A549 (cell line): ENCODE measurements at regions of chr20 and their contacts with region 1.

Region 1: GRCh38 chr20:45300961-45301360 is 5.7 kb upstream of the RBPJL start:
- DNase-seq: peak; percentile 69 to 71
- ATAC-seq: peak; percentile 86 to 99
- H3K4me3 ChIP-seq: no peak overlapping the region
- H3K27ac ChIP-seq: no peak overlapping the region
- H3K4me1 ChIP-seq: no peaks in the 10 kb centered on the region
- CTCF ChIP-seq: no peak
- EP300 ChIP-seq: no peak
- POLR2A ChIP-seq: no peak
- RAD21 ChIP-seq: no peak

Region 2: DNA sequence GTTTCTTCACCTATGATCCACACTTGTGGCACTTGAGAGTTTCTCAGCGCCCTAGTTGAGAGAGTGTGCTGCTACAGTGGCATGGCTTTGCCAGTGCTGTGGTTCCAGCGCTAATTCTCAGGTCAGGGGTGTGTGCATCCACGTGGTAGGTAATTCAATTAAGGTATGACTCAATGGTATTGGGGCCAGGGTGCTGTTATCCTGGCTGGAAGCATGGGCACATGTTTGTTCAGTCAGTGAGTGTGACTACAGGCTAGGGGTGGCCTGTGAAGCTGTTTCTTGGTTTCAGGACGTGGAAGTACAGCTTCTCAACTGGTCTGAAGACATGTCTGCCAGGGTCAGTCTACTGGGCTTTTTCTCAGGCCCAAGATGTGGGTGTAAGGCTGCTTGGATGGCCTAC is 82.8 kb before region 1 on chr20:
- CTCF ChIA-PET with region 1: no interaction called
- POLR2A ChIA-PET with region 1: no interaction called
- DNase-seq: no peak
- ATAC-seq: no peak; a peak in 1 of 6 replicates
- H3K4me3 ChIP-seq: no peak overlapping the region
- H3K27ac ChIP-seq: no peak overlapping the region
- H3K4me1 ChIP-seq: no peaks in the 10 kb centered on the region
- CTCF ChIP-seq: no peak
- EP300 ChIP-seq: no peak
- POLR2A ChIP-seq: no peak
- RAD21 ChIP-seq: no peak

Region 3: DNA sequence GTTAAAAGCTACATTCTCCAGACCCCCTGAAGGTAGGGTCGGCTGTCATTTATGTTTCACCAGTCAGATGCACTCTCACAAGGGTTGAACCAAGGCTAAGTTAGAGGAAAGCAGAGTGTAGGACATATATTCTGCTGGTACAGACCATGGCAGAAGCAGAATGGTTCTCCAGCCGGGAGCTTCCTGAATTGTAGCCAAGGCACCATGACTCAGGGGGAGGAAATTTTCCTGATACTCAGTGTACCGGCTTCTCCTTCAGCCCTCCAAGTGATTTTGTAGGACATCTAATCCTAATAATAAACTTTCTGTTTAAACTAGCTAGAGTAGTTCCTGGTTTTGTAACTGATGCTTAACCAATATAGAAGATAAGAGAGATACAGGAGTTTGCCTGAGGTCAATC is 32.4 kb before region 1 on chr20:
- CTCF ChIA-PET with region 1: no interaction called
- POLR2A ChIA-PET with region 1: no interaction called
- DNase-seq: no peak
- ATAC-seq: no peak
- H3K4me3 ChIP-seq: no peak overlapping the region
- H3K27ac ChIP-seq: no peak overlapping the region
- H3K4me1 ChIP-seq: no peaks in the 10 kb centered on the region
- CTCF ChIP-seq: no peak
- EP300 ChIP-seq: no peak
- POLR2A ChIP-seq: no peak
- RAD21 ChIP-seq: no peak

Region 4: GRCh38 chr20:45311589-45312211 is 10.7 kb after region 1 on chr20:
- CTCF ChIA-PET with region 1: interaction called, 13 read pairs
- POLR2A ChIA-PET with region 1: no interaction called
- DNase-seq: peak; percentile 75 to 78
- ATAC-seq: peak; percentile 79 to 94
- H3K4me3 ChIP-seq: no peak overlapping the region; the same call in 2 of the 3 replicates
- H3K27ac ChIP-seq: peak overlapping the region in 1 of 2 experiments; percentile 41; a peak in 1 of 6 replicates
- H3K4me1 ChIP-seq: no peaks in the 10 kb centered on the region
- CTCF ChIP-seq: peak; percentile 77
- EP300 ChIP-seq: no peak
- POLR2A ChIP-seq: no peak
- RAD21 ChIP-seq: peak; percentile 60 to 68